Activated CD4-positive, alpha-beta memory T cell treated with anti-CD3 and anti-CD28 coated beads, Interleukin-2, amount 10 ng/mL, durations not matched to agents 7 days and 5 days (primary cell): ENCODE measurements at regions of chr17 and their contacts with region 1.

Region 1: GRCh38 chr17:37598145-37598544 is 11.1 kb downstream of the SYNRG start:
- DNase-seq: no peak
- H3K4me3 Mint-ChIP-seq: no peak overlapping the region
- H3K27ac Mint-ChIP-seq: no peak overlapping the region
- H3K4me1 Mint-ChIP-seq: peaks cover 17% of the 10 kb centered on the region
- H3K27me3 Mint-ChIP-seq: no peaks in the 10 kb centered on the region

Region 2: GRCh38 chr17:37489197-37490001 is 108.7 kb before region 1 on chr17 and contains the start of gene DUSP14:
- CTCF ChIA-PET with region 1: no interaction called
- POLR2A ChIA-PET with region 1: no interaction called
- DNase-seq: peak; percentile 83
- H3K4me3 Mint-ChIP-seq: peak within 1 kb of the TSS; percentile 91
- H3K27ac Mint-ChIP-seq: peak within 1 kb of the TSS; percentile 84
- H3K4me1 Mint-ChIP-seq: peaks cover 39% of the 10 kb centered on the region
- H3K27me3 Mint-ChIP-seq: no peaks in the 10 kb centered on the region
- total RNA-seq, gene DUSP14: 14.6 to 16.3 TPM

Region 3: GRCh38 chr17:37527249-37527851 is 70.8 kb before region 1 on chr17:
- CTCF ChIA-PET with region 1: no interaction called
- POLR2A ChIA-PET with region 1: no interaction called
- DNase-seq: no peak
- H3K4me3 Mint-ChIP-seq: no peak overlapping the region
- H3K27ac Mint-ChIP-seq: no peak overlapping the region
- H3K4me1 Mint-ChIP-seq: peaks cover 5% of the 10 kb centered on the region
- H3K27me3 Mint-ChIP-seq: no peaks in the 10 kb centered on the region

Region 4: GRCh38 chr17:37609170-37610040 is 11.3 kb after region 1 on chr17 and contains the start of gene SYNRG:
- CTCF ChIA-PET with region 1: interaction called, 6 read pairs
- POLR2A ChIA-PET with region 1: interaction called, 11 read pairs
- DNase-seq: peak; percentile 95
- H3K4me3 Mint-ChIP-seq: peak within 1 kb of the TSS; percentile 72
- H3K27ac Mint-ChIP-seq: peak within 1 kb of the TSS; percentile 90
- H3K4me1 Mint-ChIP-seq: peaks cover 38% of the 10 kb centered on the region
- H3K27me3 Mint-ChIP-seq: no peaks in the 10 kb centered on the region
- total RNA-seq, gene SYNRG: 106 to 113 TPM